CD8-positive, alpha-beta T cell (primary cell): ENCODE measurements at regions of chr11 and their contacts with region 1.

Region 1: DNA sequence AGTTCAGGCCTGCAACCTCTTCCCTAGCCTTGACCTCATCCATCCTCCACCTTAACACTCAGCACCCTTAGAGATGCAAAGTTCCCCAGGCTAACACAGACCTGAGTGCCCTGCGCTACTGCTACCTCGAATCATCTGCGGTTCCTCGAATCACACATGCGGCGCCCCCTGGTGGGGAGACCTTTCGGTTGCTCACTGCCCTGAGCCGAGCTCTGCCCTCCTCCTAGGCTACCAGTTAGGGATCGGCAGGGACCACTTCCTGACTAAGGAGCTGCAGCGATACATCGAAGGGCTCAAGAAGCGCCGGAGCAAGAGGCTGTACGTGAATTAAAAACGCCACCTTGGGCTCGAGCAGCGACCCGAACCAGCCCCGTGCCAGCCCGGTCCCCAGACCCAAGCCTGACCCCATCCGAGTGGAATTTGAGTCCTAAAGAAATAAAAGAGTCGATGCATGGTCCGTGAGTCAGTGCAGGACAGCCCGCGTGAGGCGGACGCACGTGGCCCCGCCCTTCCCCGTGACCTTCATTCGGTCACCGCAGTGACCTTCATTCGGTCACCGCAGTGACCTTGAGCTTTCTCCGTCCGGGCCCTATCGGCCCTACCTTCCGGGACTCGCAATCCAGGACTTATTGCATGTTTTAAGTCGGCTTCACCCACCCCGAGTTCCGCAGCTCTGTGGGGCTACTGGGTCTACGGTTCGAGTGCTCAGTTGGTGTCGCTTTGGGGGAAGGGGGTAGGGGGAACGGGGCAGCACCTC is 830 bp upstream of the ESRRA start:
- DNase-seq: peak; percentile 89 to 98 (median 94)
- ATAC-seq: peak; percentile 18
- H3K4me3 ChIP-seq: peak overlapping the region; percentile 80 to 99
- H3K4me3 Mint-ChIP-seq: peak overlapping the region; percentile 92
- H3K27ac ChIP-seq: peak overlapping the region; percentile 96 to 98
- H3K27ac Mint-ChIP-seq: peak overlapping the region; percentile 97
- H3K4me1 ChIP-seq: peaks cover 50% of the 10 kb centered on the region
- H3K4me1 Mint-ChIP-seq: peaks cover 41% of the 10 kb centered on the region
- H3K27me3 ChIP-seq: peaks cover 13 to 21% of the 10 kb centered on the region in 2 experiments
- H3K27me3 Mint-ChIP-seq: peaks cover 19% of the 10 kb centered on the region
- CTCF ChIP-seq: peak; percentile 90

Region 2: GRCh38 chr11:64196626-64197025 is 107.9 kb before region 1 on chr11:
- CTCF ChIA-PET with region 1: interaction called, 276 read pairs
- POLR2A ChIA-PET with region 1: no interaction called
- intact Hi-C with region 1: no loop called
- DNase-seq: no peak
- ATAC-seq: no peak
- H3K4me3 ChIP-seq: no peak overlapping the region
- H3K4me3 Mint-ChIP-seq: no peak overlapping the region
- H3K27ac ChIP-seq: no peak overlapping the region
- H3K27ac Mint-ChIP-seq: no peak overlapping the region
- H3K4me1 ChIP-seq: no peaks in the 10 kb centered on the region
- H3K4me1 Mint-ChIP-seq: peaks cover 18% of the 10 kb centered on the region
- H3K27me3 ChIP-seq: no peaks in the 10 kb centered on the region
- H3K27me3 Mint-ChIP-seq: no peaks in the 10 kb centered on the region
- CTCF ChIP-seq: no peak

Region 3: GRCh38 chr11:64225612-64226506 is 78.6 kb before region 1 on chr11 and contains the starts of genes NUDT22 and TRPT1:
- CTCF ChIA-PET with region 1: interaction called, 14 read pairs
- POLR2A ChIA-PET with region 1: interaction called, 3 read pairs
- intact Hi-C with region 1: loop called in 1 of 2 experiments (anchors 2 kb)
- DNase-seq: peak; percentile 75 to 96 (median 93)
- ATAC-seq: peak; percentile 65
- H3K4me3 ChIP-seq: peak within 1 kb of the TSS; percentile 76 to 100
- H3K4me3 Mint-ChIP-seq: peak within 1 kb of the TSS; percentile 93
- H3K27ac ChIP-seq: peak within 1 kb of the TSS; percentile 85 to 88
- H3K27ac Mint-ChIP-seq: peak within 1 kb of the TSS; percentile 91
- H3K4me1 ChIP-seq: peaks cover 41% of the 10 kb centered on the region
- H3K4me1 Mint-ChIP-seq: peaks cover 30% of the 10 kb centered on the region
- H3K27me3 ChIP-seq: no peaks in the 10 kb centered on the region
- H3K27me3 Mint-ChIP-seq: no peaks in the 10 kb centered on the region
- CTCF ChIP-seq: peak; percentile 58
- total RNA-seq, gene NUDT22: 20.1 to 23.6 TPM
- total RNA-seq, gene TRPT1: 12.3 to 14.3 TPM

Region 4: GRCh38 chr11:64269380-64270234 is 34.9 kb before region 1 on chr11:
- CTCF ChIA-PET with region 1: interaction called, 82 read pairs
- POLR2A ChIA-PET with region 1: interaction called, 14 read pairs
- intact Hi-C with region 1: loop called (anchors 1 kb)
- DNase-seq: peak; percentile 94 to 99 (median 97)
- ATAC-seq: peak; percentile 64
- H3K4me3 ChIP-seq: peak overlapping the region; percentile 79 to 81
- H3K4me3 Mint-ChIP-seq: peak overlapping the region; percentile 95
- H3K27ac ChIP-seq: peak overlapping the region; percentile 69 to 99
- H3K27ac Mint-ChIP-seq: peak overlapping the region; percentile 94
- H3K4me1 ChIP-seq: peaks cover 24% of the 10 kb centered on the region
- H3K4me1 Mint-ChIP-seq: peaks cover 27% of the 10 kb centered on the region
- H3K27me3 ChIP-seq: no peaks in the 10 kb centered on the region
- H3K27me3 Mint-ChIP-seq: no peaks in the 10 kb centered on the region
- CTCF ChIP-seq: peak; percentile 40

Region 5: GRCh38 chr11:64291752-64292459 is 12.6 kb before region 1 on chr11:
- CTCF ChIA-PET with region 1: interaction called, 55 read pairs
- POLR2A ChIA-PET with region 1: interaction called, 3 read pairs
- intact Hi-C with region 1: no loop called
- DNase-seq: peak in 2 of 9 experiments; percentile 51 to 55
- ATAC-seq: peak; percentile 70
- H3K4me3 ChIP-seq: peak overlapping the region in 1 of 2 experiments; percentile 30
- H3K4me3 Mint-ChIP-seq: no peak overlapping the region
- H3K27ac ChIP-seq: no peak overlapping the region
- H3K27ac Mint-ChIP-seq: no peak overlapping the region
- H3K4me1 ChIP-seq: peaks cover 14% of the 10 kb centered on the region
- H3K4me1 Mint-ChIP-seq: peaks cover 12% of the 10 kb centered on the region
- H3K27me3 ChIP-seq: peaks cover 30 to 31% of the 10 kb centered on the region in 2 experiments
- H3K27me3 Mint-ChIP-seq: peaks cover 46% of the 10 kb centered on the region
- CTCF ChIP-seq: no peak

Region 6: GRCh38 chr11:64341851-64342791 is 37.6 kb after region 1 on chr11:
- CTCF ChIA-PET with region 1: interaction called, 7 read pairs
- POLR2A ChIA-PET with region 1: interaction called, 9 read pairs
- intact Hi-C with region 1: loop called in 1 of 2 experiments (anchors 1 kb)
- DNase-seq: peak; percentile 75 to 90 (median 88)
- ATAC-seq: peak; percentile 63
- H3K4me3 ChIP-seq: no peak overlapping the region
- H3K4me3 Mint-ChIP-seq: peak overlapping the region; percentile 84
- H3K27ac ChIP-seq: peak overlapping the region in 1 of 2 experiments; percentile 86
- H3K27ac Mint-ChIP-seq: no peak overlapping the region
- H3K4me1 ChIP-seq: peaks cover 34% of the 10 kb centered on the region
- H3K4me1 Mint-ChIP-seq: peaks cover 41% of the 10 kb centered on the region
- H3K27me3 ChIP-seq: no peaks in the 10 kb centered on the region
- H3K27me3 Mint-ChIP-seq: no peaks in the 10 kb centered on the region
- CTCF ChIP-seq: peak; percentile 36